ENCODE measurements at regions of chr6 and their contacts with region 1.

Region 1: GRCh38 chr6:157054531-157054979 is 268.8 kb downstream of the TMEM242 start:
- DNase-seq: no peak
- H3K4me3 Mint-ChIP-seq: peak overlapping the region; percentile 33
- H3K27ac Mint-ChIP-seq: peak overlapping the region; percentile 81
- H3K4me1 Mint-ChIP-seq: peaks cover 34% of the 10 kb centered on the region
- H3K27me3 Mint-ChIP-seq: no peaks in the 10 kb centered on the region

Region 2: GRCh38 chr6:157029980-157030690 is 24.4 kb before region 1 on chr6:
- intact Hi-C with region 1: no loop called
- DNase-seq: no peak
- H3K4me3 Mint-ChIP-seq: no peak overlapping the region
- H3K27ac Mint-ChIP-seq: no peak overlapping the region
- H3K4me1 Mint-ChIP-seq: peaks cover 29% of the 10 kb centered on the region
- H3K27me3 Mint-ChIP-seq: no peaks in the 10 kb centered on the region

Region 3: DNA sequence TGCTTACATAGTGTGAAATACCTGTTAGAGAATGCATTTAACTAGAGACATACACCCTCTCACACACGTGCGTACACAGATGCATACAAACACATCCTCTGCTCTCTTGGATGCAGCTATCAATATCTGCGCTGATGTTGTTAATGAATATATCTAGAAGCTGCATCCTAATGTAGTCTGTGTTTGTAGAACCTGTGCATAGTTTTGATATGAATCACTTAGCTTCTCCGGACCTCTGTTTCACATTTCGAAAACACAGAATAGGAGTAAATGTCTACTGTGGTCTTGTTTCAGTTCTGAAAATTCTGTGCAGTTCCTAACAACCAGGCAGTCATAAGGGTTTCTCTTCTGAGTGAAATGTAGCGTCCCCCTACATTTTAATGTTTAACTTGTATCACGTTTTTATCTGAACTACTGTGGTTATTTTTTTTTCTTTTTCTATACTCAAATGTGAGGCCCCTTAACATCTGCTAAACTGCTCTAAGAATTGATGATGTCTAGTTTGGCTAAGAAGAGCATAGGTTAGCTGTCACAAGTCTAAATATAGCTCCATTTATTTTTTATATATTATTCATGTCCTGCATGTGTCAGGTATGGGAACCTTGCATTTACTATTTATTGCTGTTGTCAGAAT is 14.3 kb after region 1 on chr6:
- intact Hi-C with region 1: loop called (anchors 1 kb)
- DNase-seq: no peak
- H3K4me3 Mint-ChIP-seq: no peak overlapping the region
- H3K27ac Mint-ChIP-seq: peak overlapping the region; percentile 58
- H3K4me1 Mint-ChIP-seq: peaks cover 54% of the 10 kb centered on the region
- H3K27me3 Mint-ChIP-seq: no peaks in the 10 kb centered on the region

Region 4: DNA sequence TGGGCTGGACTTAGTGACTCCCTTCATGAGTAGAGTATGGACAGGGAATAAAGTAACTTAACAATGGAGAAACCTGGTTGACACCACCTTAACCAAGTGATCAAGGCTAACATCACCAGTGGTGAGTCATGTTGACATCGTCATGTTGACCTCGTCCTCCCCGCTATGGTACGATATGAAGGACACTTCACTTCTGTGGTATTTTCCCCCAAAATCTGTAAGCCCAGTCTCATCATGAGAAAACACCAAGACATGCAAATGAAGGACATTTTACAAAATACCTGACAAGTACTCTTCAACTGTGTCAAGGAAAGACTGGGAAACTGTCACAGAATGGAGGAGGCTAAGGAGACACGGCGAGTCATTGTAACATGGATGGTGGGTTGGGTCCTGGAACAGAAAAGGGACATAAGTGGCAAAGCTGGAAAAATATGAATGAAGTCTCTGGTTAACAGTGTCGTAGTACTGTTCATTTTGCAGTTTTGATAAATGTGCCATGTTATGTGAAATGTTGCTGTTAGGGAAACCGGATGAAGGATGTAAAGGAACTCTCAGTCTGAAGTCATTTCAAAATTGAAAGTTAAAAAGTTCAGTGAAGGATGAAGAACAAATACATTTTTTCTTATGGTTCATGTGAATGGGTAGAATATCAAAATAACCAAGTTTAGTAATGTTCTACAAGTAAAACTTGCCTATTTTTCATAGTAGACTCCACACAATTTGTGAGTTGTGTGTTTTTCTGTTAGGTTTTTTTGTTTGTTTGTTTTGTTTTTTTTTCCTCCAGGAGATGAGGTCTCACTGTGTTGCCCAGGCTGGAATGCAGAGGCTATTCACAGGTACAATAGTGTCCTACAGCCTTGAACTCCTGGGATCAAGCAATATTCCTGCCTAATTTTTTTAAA is 21.2 kb after region 1 on chr6:
- intact Hi-C with region 1: loop called (anchors 1 kb)
- DNase-seq: no peak
- H3K4me3 Mint-ChIP-seq: peak overlapping the region; percentile 43
- H3K27ac Mint-ChIP-seq: peak overlapping the region; percentile 90
- H3K4me1 Mint-ChIP-seq: peaks cover 46% of the 10 kb centered on the region
- H3K27me3 Mint-ChIP-seq: no peaks in the 10 kb centered on the region

Region 5: DNA sequence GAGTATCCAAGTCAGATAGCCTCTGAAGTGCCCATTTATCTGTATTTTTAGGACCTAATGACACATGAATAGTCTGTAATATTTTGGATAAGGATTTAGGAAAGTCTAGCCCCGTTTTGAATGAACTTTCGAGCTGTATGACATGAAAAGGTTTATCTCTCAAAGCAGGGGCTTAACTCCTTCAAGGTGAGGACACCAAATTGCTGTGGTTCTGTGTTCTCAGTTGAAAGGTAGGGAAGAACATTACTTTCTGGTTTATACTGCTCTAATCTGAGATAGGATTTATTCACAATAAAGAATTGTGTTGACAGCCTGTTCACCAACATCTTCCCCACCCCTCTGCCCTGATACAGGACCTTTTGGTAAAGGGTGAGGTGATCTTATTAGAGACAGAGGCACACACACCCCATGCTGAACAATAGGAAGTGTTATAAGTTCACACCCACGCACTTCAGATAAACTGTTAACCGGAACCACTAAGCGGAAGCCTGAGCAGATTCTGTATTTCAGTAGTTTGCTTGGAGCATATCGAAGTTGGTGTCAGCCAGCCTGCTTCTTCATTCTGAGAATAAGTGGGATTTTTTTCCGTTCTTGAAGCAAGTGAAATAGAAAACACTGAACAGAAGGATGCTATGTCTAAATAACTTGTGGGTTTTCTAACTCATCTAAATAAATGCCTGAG is 45.5 kb after region 1 on chr6:
- intact Hi-C with region 1: loop called (anchors 1 kb)
- DNase-seq: peak; percentile 57
- H3K4me3 Mint-ChIP-seq: peak overlapping the region; percentile 28
- H3K27ac Mint-ChIP-seq: peak overlapping the region; percentile 78
- H3K4me1 Mint-ChIP-seq: peaks cover 47% of the 10 kb centered on the region
- H3K27me3 Mint-ChIP-seq: no peaks in the 10 kb centered on the region

Region 6: GRCh38 chr6:157107915-157108651 is 53.5 kb after region 1 on chr6:
- intact Hi-C with region 1: loop called (anchors 1 kb)
- DNase-seq: no peak
- H3K4me3 Mint-ChIP-seq: peak overlapping the region; percentile 0
- H3K27ac Mint-ChIP-seq: peak overlapping the region; percentile 81
- H3K4me1 Mint-ChIP-seq: peaks cover 56% of the 10 kb centered on the region
- H3K27me3 Mint-ChIP-seq: no peaks in the 10 kb centered on the region

Region 7: DNA sequence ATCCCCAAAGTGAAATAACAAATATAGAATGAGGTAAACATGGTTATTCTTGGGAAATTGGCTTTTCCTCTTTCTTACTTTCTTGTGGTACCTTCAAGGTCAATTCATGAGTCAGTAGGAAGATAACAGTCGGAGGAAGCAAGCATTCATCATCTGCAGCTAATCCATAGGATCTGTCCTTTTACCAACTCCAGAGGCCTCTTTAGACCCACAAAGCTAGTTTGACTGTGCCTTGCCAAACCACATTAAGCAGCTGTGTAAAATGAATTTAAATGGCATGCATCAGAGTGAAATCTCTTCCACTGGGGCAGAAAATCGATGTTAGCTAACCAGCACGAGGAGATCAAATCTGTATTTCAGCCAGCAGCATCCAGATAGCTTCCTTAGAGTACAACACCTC is 97.4 kb after region 1 on chr6:
- intact Hi-C with region 1: loop called (anchors 5 kb)
- DNase-seq: no peak
- H3K4me3 Mint-ChIP-seq: no peak overlapping the region
- H3K27ac Mint-ChIP-seq: peak overlapping the region; percentile 55
- H3K4me1 Mint-ChIP-seq: peaks cover 22% of the 10 kb centered on the region
- H3K27me3 Mint-ChIP-seq: no peaks in the 10 kb centered on the region

Region 8: GRCh38 chr6:157169656-157170055 is 115.1 kb after region 1 on chr6:
- intact Hi-C with region 1: no loop called
- DNase-seq: no peak
- H3K4me3 Mint-ChIP-seq: no peak overlapping the region
- H3K27ac Mint-ChIP-seq: no peak overlapping the region
- H3K4me1 Mint-ChIP-seq: peaks cover 2% of the 10 kb centered on the region
- H3K27me3 Mint-ChIP-seq: no peaks in the 10 kb centered on the region

Region 9: DNA sequence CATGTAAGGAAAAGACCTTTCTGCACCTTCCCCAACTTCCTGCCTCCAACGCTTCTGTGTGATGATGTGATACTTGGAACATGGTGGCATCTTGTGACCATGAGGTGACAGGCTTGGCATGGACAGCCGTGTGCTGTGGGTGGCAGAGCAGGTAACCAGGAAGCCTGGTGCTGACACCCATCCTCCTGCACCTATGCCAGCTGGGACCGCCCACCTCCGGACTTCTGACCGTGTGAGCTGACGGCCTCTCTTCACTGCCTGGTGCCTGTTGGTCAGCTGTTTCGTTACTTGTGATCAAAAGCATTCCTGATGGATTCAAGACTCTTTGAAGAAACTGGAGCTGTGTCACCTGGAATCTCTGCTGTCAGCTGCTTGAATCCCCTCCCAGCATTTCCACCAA is 198.5 kb after region 1 on chr6:
- intact Hi-C with region 1: no loop called
- DNase-seq: no peak
- H3K4me3 Mint-ChIP-seq: no peak overlapping the region
- H3K27ac Mint-ChIP-seq: no peak overlapping the region
- H3K4me1 Mint-ChIP-seq: no peaks in the 10 kb centered on the region
- H3K27me3 Mint-ChIP-seq: peaks cover 35% of the 10 kb centered on the region